ENCODE measurements at regions of chr10 and their contacts with region 1.

Region 1: DNA sequence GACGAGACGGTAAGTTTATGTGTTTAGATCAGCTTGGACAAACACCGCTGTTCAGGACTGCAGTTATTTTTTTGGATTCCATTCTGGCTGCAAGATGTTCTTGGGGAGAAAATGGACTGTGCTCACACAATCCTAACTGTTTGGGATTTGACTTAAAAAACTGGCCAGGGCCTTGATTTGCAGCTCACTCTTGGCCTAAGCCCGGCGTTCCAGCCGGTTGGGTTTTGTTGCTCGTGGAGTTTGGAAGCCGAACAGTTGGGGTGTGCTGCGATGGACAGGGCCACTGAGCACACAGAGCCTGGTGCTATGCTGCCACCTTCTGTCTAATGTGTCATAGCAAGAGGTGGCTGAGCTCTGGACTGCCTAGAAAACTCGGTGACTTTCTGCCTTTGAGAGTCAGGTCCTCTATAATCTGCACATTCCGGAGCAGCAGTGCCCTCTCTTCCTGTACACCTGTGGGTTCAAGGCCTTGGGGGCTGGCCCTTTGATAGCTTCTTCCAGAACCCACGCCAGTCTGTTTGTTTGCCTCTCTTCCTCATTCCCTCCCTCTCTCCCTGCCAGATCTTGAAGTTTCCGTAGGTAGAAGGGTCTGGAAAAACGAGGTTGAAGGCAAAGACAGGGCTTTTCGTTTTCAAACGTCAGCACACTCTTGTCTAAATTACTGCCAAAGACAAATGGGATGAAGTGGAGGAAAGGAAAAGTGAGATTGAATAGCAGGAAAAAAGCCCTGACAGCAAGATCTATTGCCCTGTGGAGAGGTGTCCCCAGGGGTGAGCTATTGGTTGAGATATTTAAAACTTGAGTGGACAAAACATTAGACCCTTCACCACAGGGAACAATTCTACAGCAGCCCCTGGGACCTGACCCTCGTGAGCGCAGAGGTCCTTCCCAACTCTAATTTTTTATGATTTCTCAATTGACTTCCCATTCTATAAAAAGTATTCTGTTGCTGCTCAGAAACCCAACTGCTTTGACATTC is 167.5 kb upstream of the HABP2 start:
- DNase-seq: peak; percentile 78 to 87
- ATAC-seq: peak; percentile 95 to 98 (median 97)
- H3K4me3 ChIP-seq: peak overlapping the region in 1 of 10 donors; percentile 29
- H3K27ac ChIP-seq: peak overlapping the region in 6 of 10 donors; percentile 5 to 61 (median 26)
- H3K4me1 ChIP-seq: peaks cover 0 to 38% (median 24%) of the 10 kb centered on the region in 9 donors
- H3K27me3 ChIP-seq: peaks cover 0 to 6% (median 0%) of the 10 kb centered on the region in 7 donors
- CTCF ChIP-seq: peak; percentile 61 to 94 (median 86)

Region 2: GRCh38 chr10:112471878-112472487 is 913.3 kb before region 1 on chr10:
- intact Hi-C with region 1: loop called in 4 of 10 experiments (anchors 2 to 10 kb)
- DNase-seq: no peak
- ATAC-seq: peak in 6 of 8 donors; percentile 56 to 73 (median 61)
- H3K4me3 ChIP-seq: no peak overlapping the region
- H3K27ac ChIP-seq: no peak overlapping the region
- H3K4me1 ChIP-seq: peaks cover 0 to 8% (median 0%) of the 10 kb centered on the region in 9 donors
- H3K27me3 ChIP-seq: no peaks in the 10 kb centered on the region
- CTCF ChIP-seq: peak; percentile 55 to 81 (median 76)

Region 3: GRCh38 chr10:112565434-112566053 is 819.8 kb before region 1 on chr10:
- intact Hi-C with region 1: loop called in 8 of 10 experiments (anchors 1 to 10 kb)
- DNase-seq: peak in 1 of 2 donors; percentile 29
- ATAC-seq: peak in 3 of 8 donors; percentile 55 to 64 (median 63)
- H3K4me3 ChIP-seq: no peak overlapping the region
- H3K27ac ChIP-seq: no peak overlapping the region
- H3K4me1 ChIP-seq: no peaks in the 10 kb centered on the region
- H3K27me3 ChIP-seq: no peaks in the 10 kb centered on the region
- CTCF ChIP-seq: peak; percentile 34 to 72 (median 66)

Region 4: DNA sequence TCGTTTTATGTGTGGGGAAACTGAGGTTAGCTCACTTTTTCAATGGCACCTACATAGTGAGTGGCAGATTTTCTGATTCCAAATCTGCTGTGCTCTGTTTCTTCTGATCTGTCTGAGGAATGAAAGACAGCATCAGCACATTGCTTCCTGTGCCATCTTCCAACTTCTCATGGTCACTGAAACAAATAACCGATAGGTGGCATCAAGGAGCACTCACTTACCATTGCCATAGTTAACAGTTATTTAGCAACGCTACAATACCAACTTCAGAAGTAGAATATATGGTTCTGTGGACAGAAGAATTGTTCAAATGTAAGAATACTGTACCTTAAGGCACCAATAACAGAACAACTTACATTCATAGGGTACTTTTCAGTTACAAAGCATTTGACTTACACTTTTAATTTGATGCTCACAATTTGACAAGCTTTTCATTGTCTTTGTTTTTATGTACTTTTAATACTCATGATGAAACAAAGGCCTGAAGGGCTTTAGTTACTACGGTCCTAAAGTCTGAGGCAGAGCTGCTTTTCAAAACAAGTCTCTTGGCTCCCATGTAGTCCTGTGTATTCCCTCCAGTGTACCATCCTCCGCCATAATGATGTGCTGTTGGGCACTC is 664.1 kb before region 1 on chr10:
- intact Hi-C with region 1: loop called in 8 of 10 experiments (anchors 1 to 10 kb)
- DNase-seq: peak in 1 of 2 donors; percentile 34
- ATAC-seq: peak in 6 of 8 donors; percentile 29 to 59 (median 54)
- H3K4me3 ChIP-seq: no peak overlapping the region
- H3K27ac ChIP-seq: no peak overlapping the region
- H3K4me1 ChIP-seq: peaks cover 0 to 5% (median 0%) of the 10 kb centered on the region in 9 donors
- H3K27me3 ChIP-seq: no peaks in the 10 kb centered on the region
- CTCF ChIP-seq: peak; percentile 39 to 83 (median 71)

Region 5: DNA sequence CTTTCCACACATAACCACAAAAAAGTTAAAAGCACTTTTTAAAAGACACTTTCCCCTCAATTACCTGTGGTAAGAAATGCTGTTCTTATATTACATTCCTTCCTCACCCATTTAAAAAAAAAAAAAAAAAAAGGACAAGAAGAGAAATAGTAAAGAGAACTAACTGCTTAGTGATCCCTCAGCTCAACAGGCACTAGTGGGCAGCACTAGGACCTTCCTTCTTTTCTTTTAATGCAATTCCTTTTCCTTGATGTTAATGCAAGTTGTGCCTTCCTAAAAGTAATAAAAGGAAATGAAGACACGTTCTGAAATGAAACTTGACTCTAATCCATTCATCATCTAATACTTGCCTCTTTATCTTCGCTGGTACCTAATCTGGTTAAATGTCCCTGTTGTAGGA is 245.6 kb before region 1 on chr10:
- intact Hi-C with region 1: loop called in 5 of 10 experiments (anchors 10 kb)
- DNase-seq: no peak
- ATAC-seq: no peak
- H3K4me3 ChIP-seq: no peak overlapping the region
- H3K27ac ChIP-seq: no peak overlapping the region
- H3K4me1 ChIP-seq: peaks cover 0 to 11% (median 7%) of the 10 kb centered on the region in 9 donors
- H3K27me3 ChIP-seq: no peaks in the 10 kb centered on the region
- CTCF ChIP-seq: peak in 2 of 9 donors; percentile 20 to 34

Region 6: GRCh38 chr10:113521123-113521795 is 135.9 kb after region 1 on chr10:
- intact Hi-C with region 1: loop called in 1 of 10 experiments (anchors 10 kb)
- DNase-seq: peak; percentile 29 to 68
- ATAC-seq: peak; percentile 73 to 89 (median 84)
- H3K4me3 ChIP-seq: no peak overlapping the region
- H3K27ac ChIP-seq: no peak overlapping the region
- H3K4me1 ChIP-seq: peaks cover 0 to 14% (median 5%) of the 10 kb centered on the region in 9 donors
- H3K27me3 ChIP-seq: peaks cover 0 to 4% (median 0%) of the 10 kb centered on the region in 7 donors
- CTCF ChIP-seq: peak; percentile 85 to 97 (median 93)